ENCODE measurements at regions of chr6 and their contacts with region 1.

Region 1: GRCh38 chr6:142926494-142927270 is 18.3 kb downstream of the HIVEP2 start:
- DNase-seq: peak; percentile 90
- ATAC-seq: peak; percentile 85
- H3K4me3 Mint-ChIP-seq: peak overlapping the region; percentile 85
- H3K27ac Mint-ChIP-seq: peak overlapping the region; percentile 93
- H3K4me1 Mint-ChIP-seq: peaks cover 44% of the 10 kb centered on the region
- H3K27me3 Mint-ChIP-seq: no peaks in the 10 kb centered on the region

Region 2: GRCh38 chr6:142819603-142820337 is 106.9 kb before region 1 on chr6:
- CTCF ChIA-PET with region 1: interaction called, 4 read pairs
- POLR2A ChIA-PET with region 1: interaction called, 18 read pairs
- DNase-seq: peak; percentile 66
- ATAC-seq: peak; percentile 77
- H3K4me3 Mint-ChIP-seq: peak overlapping the region; percentile 85
- H3K27ac Mint-ChIP-seq: peak overlapping the region; percentile 97
- H3K4me1 Mint-ChIP-seq: peaks cover 56% of the 10 kb centered on the region
- H3K27me3 Mint-ChIP-seq: no peaks in the 10 kb centered on the region

Region 3: DNA sequence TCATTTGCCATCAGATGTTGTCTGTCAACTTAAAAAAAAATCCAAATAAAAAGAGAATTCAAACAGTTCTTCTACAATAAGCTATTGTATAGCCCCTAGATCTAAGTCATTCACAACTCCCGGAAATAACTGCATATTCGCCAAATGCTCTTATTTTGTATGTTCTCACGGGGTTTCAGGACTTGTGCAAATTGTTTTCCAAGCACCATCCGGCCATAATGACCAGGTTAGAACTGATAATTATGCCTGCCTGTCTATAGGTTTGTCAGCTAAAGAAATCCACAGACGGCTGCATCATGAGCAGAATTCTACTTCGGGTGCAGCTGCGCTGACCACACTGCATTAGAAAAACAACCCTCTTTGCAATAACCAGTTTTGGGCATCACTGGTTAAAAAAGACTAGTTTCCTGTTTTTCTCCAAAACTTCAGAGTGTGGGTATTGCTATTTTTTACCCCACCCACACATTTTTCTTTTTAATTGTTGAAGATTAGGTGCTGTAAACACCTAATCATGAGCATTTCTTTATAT is 69.4 kb before region 1 on chr6:
- CTCF ChIA-PET with region 1: interaction called, 9 read pairs
- POLR2A ChIA-PET with region 1: interaction called, 39 read pairs
- DNase-seq: peak; percentile 43
- ATAC-seq: peak; percentile 24
- H3K4me3 Mint-ChIP-seq: peak overlapping the region; percentile 73
- H3K27ac Mint-ChIP-seq: peak overlapping the region; percentile 96
- H3K4me1 Mint-ChIP-seq: peaks cover 79% of the 10 kb centered on the region
- H3K27me3 Mint-ChIP-seq: no peaks in the 10 kb centered on the region

Region 4: GRCh38 chr6:142902636-142903053 is 24.0 kb before region 1 on chr6:
- CTCF ChIA-PET with region 1: interaction called, 7 read pairs
- POLR2A ChIA-PET with region 1: interaction called, 26 read pairs
- DNase-seq: peak; percentile 79
- ATAC-seq: peak; percentile 74
- H3K4me3 Mint-ChIP-seq: peak overlapping the region; percentile 66
- H3K27ac Mint-ChIP-seq: peak overlapping the region; percentile 93
- H3K4me1 Mint-ChIP-seq: peaks cover 66% of the 10 kb centered on the region
- H3K27me3 Mint-ChIP-seq: no peaks in the 10 kb centered on the region

Region 5: DNA sequence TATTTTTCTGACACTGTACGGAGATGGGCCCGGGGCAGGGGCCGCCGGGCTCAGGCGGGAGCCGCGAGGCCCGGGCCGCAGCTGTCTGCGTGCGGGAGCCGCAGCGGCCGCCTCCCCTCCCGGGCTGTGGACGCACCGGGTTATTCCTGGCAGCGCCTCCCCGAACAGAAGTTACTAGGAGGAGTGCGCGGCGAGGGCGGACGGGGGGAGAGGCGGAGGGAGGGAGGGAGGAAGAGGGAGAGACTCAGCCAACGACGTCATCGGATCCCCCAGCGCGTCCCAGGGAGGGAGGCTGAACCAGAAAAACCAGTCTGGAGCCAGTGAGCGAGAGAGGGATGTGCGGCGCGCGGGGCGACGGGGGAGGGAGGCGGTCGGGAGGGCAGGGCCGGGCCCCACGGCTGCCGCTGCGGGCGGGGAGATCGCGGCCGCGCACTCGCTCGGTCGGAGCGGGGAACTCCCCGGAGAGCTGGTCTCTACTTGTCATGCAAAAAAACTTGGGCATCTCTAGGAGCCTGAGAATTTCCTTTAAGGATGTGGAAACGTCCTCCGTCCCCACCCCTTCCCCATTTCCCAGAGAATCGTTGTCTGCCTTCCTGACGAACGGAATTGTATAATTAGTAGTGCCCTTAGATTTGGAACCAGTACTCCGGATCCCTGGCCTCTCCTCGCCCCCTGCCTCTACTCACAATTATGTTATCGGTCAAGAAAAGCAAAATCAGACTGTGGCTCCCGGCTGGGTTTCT is 19.7 kb after region 1 on chr6:
- CTCF ChIA-PET with region 1: interaction called, 22 read pairs
- POLR2A ChIA-PET with region 1: interaction called, 64 read pairs
- DNase-seq: peak; percentile 88
- ATAC-seq: peak; percentile 42
- H3K4me3 Mint-ChIP-seq: peak overlapping the region; percentile 100
- H3K27ac Mint-ChIP-seq: peak overlapping the region; percentile 94
- H3K4me1 Mint-ChIP-seq: peaks cover 38% of the 10 kb centered on the region
- H3K27me3 Mint-ChIP-seq: peaks cover 3% of the 10 kb centered on the region